BJ (cell line): ENCODE measurements at regions of chr1 and their contacts with region 1.

Region 1: DNA sequence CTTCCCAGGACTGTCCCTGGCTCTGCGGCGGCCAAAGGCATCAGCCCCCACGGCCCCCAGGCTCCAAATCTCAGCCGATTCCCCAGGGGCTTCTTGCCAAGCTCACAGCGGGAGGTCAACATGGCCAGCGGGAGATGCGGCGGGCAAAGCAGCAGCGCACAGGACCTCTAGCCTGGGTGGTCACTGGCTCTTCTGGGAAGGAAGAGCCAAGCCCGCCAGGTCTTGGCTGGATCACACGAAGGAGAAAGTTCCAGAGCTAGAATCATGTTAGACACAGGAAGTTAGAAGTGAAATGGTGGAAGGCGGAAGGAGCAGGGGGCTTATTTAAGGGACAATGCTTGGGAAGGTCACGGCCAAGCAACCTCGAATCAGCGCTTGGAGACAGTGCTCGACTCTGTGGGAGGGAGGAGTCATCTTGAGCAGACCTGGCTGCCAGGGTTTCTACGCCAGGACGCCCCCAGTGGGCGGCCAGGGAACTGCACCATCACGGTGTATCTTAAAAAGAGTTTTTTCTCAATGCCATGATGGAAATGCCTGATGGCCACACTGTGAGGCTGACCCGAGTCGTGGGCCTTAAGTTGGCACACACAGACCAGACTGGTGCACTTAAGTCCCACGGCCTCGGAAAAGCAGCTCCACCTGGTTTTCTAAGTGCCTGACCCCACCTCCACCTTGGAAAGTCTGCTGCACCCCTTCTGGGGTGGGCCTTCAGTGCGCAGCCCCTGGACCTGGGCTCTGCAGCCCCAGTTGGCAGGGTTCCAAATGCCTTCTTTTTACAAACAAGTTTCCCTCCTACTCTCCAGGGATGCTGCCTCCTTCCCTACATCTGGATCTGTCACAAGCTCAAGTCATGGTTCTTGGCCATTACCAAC is 29.3 kb downstream of the SLC66A1 start:
- DNase-seq: no peak
- H3K4me3 ChIP-seq: no peak overlapping the region
- H3K27me3 ChIP-seq: no peaks in the 10 kb centered on the region
- CTCF ChIP-seq: peak; percentile 94

Region 2: GRCh38 chr1:19220991-19221390 is 120.4 kb before region 1 on chr1:
- CTCF ChIA-PET with region 1: no interaction called
- POLR2A ChIA-PET with region 1: no interaction called
- DNase-seq: no peak
- H3K4me3 ChIP-seq: no peak overlapping the region
- H3K27me3 ChIP-seq: no peaks in the 10 kb centered on the region
- CTCF ChIP-seq: no peak

Region 3: GRCh38 chr1:19330449-19331135 is 10.8 kb before region 1 on chr1:
- CTCF ChIA-PET with region 1: interaction called, 22 read pairs
- POLR2A ChIA-PET with region 1: no interaction called
- DNase-seq: no peak
- H3K4me3 ChIP-seq: no peak overlapping the region
- H3K27me3 ChIP-seq: no peaks in the 10 kb centered on the region
- CTCF ChIP-seq: no peak

Region 4: GRCh38 chr1:19353596-19353995 is 12.2 kb after region 1 on chr1:
- CTCF ChIA-PET with region 1: interaction called, 18 read pairs
- POLR2A ChIA-PET with region 1: no interaction called
- DNase-seq: no peak
- H3K4me3 ChIP-seq: no peak overlapping the region
- H3K27me3 ChIP-seq: no peaks in the 10 kb centered on the region
- CTCF ChIP-seq: no peak

Region 5: DNA sequence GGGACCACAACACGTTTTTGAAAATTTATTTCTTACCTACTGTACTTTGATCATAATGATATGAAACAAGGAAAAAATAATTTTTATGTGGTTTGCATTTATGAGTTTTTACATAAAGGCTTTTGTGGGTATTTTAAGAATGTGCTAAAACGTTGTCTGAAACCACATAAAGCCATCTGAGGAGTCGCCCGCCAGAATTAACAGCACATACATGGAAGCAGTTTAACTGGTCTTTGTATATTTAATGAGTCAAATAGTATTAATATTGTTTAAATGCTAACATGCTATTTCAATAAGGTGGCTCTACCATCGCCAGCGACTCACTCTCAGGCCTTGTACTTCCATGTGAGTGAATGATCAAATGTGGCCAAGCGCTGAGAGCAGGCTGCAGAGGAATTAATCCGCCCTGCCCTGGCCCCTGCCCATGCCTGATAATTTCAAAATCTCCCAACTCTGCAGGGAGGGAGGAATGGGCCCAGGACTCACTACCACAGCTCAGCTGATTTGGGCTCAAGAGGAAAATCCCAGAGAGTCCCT is 20.2 kb after region 1 on chr1:
- CTCF ChIA-PET with region 1: interaction called, 14 read pairs
- POLR2A ChIA-PET with region 1: no interaction called
- DNase-seq: no peak
- H3K4me3 ChIP-seq: no peak overlapping the region
- H3K27me3 ChIP-seq: no peaks in the 10 kb centered on the region
- CTCF ChIP-seq: no peak

Region 6: GRCh38 chr1:19374083-19374801 is 32.8 kb after region 1 on chr1:
- CTCF ChIA-PET with region 1: interaction called, 12 read pairs
- POLR2A ChIA-PET with region 1: no interaction called
- DNase-seq: no peak
- H3K4me3 ChIP-seq: no peak overlapping the region
- H3K27me3 ChIP-seq: no peaks in the 10 kb centered on the region
- CTCF ChIP-seq: peak; percentile 57